A673 (cell line): ENCODE measurements at regions of chr17 and their contacts with region 1.

Region 1: DNA sequence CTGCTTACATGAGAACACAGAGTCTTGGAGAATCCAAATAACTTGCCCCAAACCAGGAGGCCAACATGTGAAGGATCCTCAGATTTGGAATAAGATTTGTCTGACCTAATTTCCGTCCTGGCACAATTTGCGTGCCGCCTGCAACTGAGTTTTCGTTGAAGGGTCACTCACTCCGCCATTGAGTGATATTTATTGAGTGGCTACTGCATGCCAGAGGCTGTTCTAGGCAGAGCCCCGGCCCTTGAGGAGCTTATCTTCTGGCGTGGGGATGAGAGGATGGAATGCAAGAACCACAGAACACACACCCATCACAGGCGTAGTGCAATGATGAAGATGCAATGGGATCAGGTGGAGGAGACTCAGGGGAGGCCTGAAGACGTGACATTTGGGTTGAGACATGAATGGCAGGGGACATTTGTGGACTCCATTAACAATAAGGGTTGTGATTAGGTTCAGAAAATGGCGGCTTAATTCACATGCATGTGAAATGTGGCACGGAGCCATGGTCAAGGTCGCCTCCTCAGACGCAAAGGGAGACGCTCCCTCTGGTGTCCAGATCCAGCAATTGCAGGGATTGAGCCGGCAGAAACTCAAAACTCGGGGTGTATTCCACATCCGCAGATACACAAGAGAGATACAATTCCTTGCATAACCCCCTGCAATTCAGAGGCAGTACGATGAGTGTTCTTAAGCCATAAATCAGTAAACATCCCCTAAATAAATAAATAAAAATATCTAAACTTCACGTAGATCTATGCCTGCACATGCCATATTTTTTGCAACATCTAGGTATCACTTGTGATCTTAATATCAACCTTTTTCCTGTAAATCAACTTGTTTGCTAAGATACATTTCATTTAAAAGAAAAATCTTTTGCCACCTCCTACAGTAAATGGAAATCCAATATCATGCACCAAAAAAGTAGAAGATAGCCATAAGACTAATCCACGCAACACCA is 57.9 kb upstream of the CACNG4 start:
- DNase-seq: peak; percentile 91
- H3K4me3 ChIP-seq: no peak overlapping the region
- H3K27ac ChIP-seq: no peak overlapping the region
- H3K4me1 ChIP-seq: peaks cover 8% of the 10 kb centered on the region
- H3K27me3 ChIP-seq: no peaks in the 10 kb centered on the region
- CTCF ChIP-seq: peak; percentile 95

Region 2: DNA sequence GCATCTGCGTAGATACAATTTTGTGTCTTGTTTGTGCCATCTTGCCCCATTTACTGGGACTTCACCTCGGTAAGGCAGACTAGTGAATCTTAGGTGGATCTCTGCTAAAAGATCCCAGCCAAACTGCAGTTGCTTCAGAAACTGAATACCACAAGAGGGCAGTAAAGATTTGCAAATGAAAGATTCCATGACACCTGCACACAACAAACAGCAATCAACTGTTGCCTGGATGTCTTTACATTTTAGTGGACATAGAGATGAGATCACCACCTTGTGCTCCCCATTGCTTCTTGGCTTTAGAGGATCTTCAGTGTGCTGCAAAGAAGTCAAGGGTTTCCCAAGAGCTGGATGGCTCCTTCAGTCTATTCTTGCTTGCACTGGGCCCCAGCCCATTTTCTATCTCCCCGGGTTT is 190.8 kb before region 1 on chr17:
- CTCF ChIA-PET with region 1: no interaction called
- POLR2A ChIA-PET with region 1: no interaction called
- intact Hi-C with region 1: loop called (anchors 1 kb)
- DNase-seq: peak; percentile 79
- H3K4me3 ChIP-seq: no peak overlapping the region
- H3K27ac ChIP-seq: no peak overlapping the region
- H3K4me1 ChIP-seq: peaks cover 13% of the 10 kb centered on the region
- H3K27me3 ChIP-seq: no peaks in the 10 kb centered on the region
- CTCF ChIP-seq: peak; percentile 89

Region 3: GRCh38 chr17:66834918-66835454 is 71.6 kb before region 1 on chr17 and contains the start of gene CACNG5:
- CTCF ChIA-PET with region 1: no interaction called
- POLR2A ChIA-PET with region 1: no interaction called
- intact Hi-C with region 1: no loop called
- DNase-seq: peak; percentile 33
- H3K4me3 ChIP-seq: peak within 1 kb of the TSS; percentile 47
- H3K27ac ChIP-seq: no peak within 1 kb of the TSS
- H3K4me1 ChIP-seq: peaks cover 30% of the 10 kb centered on the region
- H3K27me3 ChIP-seq: no peaks in the 10 kb centered on the region
- CTCF ChIP-seq: no peak
- total RNA-seq, gene CACNG5: 0.88 and 3.1 TPM in 2 replicates

Region 4: GRCh38 chr17:66975604-66976384 is 69.2 kb after region 1 on chr17:
- CTCF ChIA-PET with region 1: no interaction called
- POLR2A ChIA-PET with region 1: no interaction called
- intact Hi-C with region 1: loop called (anchors 5 kb)
- DNase-seq: peak; percentile 48
- H3K4me3 ChIP-seq: no peak overlapping the region
- H3K27ac ChIP-seq: no peak overlapping the region
- H3K4me1 ChIP-seq: no peaks in the 10 kb centered on the region
- H3K27me3 ChIP-seq: no peaks in the 10 kb centered on the region
- CTCF ChIP-seq: peak; percentile 51

Region 5: GRCh38 chr17:66988049-66988798 is 81.6 kb after region 1 on chr17:
- CTCF ChIA-PET with region 1: no interaction called
- POLR2A ChIA-PET with region 1: no interaction called
- intact Hi-C with region 1: no loop called
- DNase-seq: no peak
- H3K4me3 ChIP-seq: no peak overlapping the region
- H3K27ac ChIP-seq: no peak overlapping the region
- H3K4me1 ChIP-seq: no peaks in the 10 kb centered on the region
- H3K27me3 ChIP-seq: no peaks in the 10 kb centered on the region
- CTCF ChIP-seq: no peak